ENCODE measurements at regions of chr19 and their contacts with region 1.

Region 1: GRCh38 chr19:34269968-34270621 is 15.7 kb downstream of the GARRE1 start:
- DNase-seq: no peak
- H3K4me3 ChIP-seq: no peak overlapping the region
- H3K27ac ChIP-seq: peak overlapping the region; percentile 72
- H3K4me1 ChIP-seq: peaks cover 34% of the 10 kb centered on the region
- H3K27me3 ChIP-seq: no peaks in the 10 kb centered on the region
- CTCF ChIP-seq: no peak
- POLR2A ChIP-seq: no peak

Region 2: DNA sequence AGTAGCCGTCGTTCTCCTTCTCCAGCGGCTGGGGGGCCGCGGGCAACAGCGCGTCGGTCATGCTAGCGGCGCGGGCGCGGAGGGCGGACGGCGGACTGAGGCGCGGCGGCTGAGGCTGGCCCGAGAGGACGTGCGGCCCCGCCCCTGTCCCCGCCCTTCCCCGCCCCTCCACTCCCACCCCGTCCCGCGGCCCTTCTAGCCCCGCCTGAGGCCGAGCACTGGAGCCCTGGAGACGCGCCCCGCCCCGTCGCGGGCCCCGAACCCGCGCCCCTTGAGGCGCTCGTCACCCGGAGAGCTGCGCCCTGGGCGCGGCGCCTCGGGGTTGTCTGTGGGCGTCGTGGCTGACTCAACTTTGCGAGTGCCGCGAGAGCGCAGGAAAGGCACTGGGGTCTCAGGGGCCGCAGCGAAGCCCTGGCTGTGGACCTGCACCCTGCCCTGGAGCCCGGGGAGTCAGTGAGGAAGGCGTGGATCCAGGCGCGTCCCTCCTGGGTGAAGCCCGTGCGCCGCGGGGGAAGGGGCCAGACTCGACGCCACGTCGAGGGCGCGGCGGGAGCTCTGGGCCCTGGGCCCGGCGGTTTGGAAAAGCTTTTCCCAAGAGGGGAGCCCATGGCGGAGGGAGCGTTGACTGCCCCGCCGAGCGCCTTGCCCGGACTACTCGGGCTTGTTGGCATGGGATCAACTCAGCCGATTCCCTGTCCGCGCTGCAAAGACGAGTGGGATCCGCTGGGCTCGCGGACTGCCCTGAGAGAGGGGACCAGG is 1205.1 kb before region 1 on chr19 and contains the start of gene RHPN2:
- intact Hi-C with region 1: no loop called
- DNase-seq: no peak
- H3K4me3 ChIP-seq: peak within 1 kb of the TSS; percentile 46 to 77
- H3K27ac ChIP-seq: no peak within 1 kb of the TSS
- H3K4me1 ChIP-seq: peaks cover 16% of the 10 kb centered on the region
- H3K27me3 ChIP-seq: no peaks in the 10 kb centered on the region
- CTCF ChIP-seq: no peak
- POLR2A ChIP-seq: no peak
- total RNA-seq, gene RHPN2: 3.4 TPM

Region 3: GRCh38 chr19:34332027-34332760 is 62.1 kb after region 1 on chr19:
- intact Hi-C with region 1: no loop called
- DNase-seq: no peak
- H3K4me3 ChIP-seq: no peak overlapping the region
- H3K27ac ChIP-seq: peak overlapping the region; percentile 10
- H3K4me1 ChIP-seq: no peaks in the 10 kb centered on the region
- H3K27me3 ChIP-seq: no peaks in the 10 kb centered on the region
- CTCF ChIP-seq: no peak
- POLR2A ChIP-seq: no peak

Region 4: DNA sequence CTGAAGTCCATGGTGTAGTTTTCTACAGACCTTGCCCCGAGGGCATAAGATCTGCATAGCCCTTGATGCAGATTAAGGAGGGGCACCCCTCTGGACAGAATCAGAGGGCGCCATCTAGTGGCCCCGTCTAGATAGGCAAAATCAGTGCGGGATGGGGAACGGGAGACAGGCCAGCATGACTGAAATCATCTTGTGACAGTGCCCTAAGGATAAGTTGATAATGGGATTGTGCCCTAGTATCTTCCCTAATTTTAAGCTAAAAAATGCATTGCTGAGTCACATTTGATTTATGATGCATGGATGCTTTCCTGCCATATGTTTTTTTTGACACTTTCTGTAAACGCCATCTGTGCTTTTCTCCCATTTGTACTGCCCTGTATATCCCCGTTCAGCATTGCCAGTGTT is 75.9 kb after region 1 on chr19:
- intact Hi-C with region 1: loop called (anchors 10 kb)
- DNase-seq: no peak
- H3K4me3 ChIP-seq: no peak overlapping the region
- H3K27ac ChIP-seq: no peak overlapping the region
- H3K4me1 ChIP-seq: no peaks in the 10 kb centered on the region
- H3K27me3 ChIP-seq: no peaks in the 10 kb centered on the region
- CTCF ChIP-seq: peak; percentile 17 to 25 (median 23)
- POLR2A ChIP-seq: no peak

Measured in vagina (tissue), 2 donors.